Psoas muscle (tissue), 8 donors: ENCODE measurements at regions of chr3 and their contacts with region 1.

Region 1: GRCh38 chr3:112814266-112814665 is 32.4 kb downstream of the CD200R1L start:
- DNase-seq: no peak
- ATAC-seq: peak in 1 of 4 donors; percentile 55
- H3K4me3 ChIP-seq: no peak overlapping the region
- H3K27ac ChIP-seq: no peak overlapping the region
- H3K4me1 ChIP-seq: no peaks in the 10 kb centered on the region
- H3K27me3 ChIP-seq: no peaks in the 10 kb centered on the region
- CTCF ChIP-seq: peak; percentile 44

Region 2: GRCh38 chr3:112642912-112643506 is 171.3 kb before region 1 on chr3:
- intact Hi-C with region 1: loop called (anchors 2 to 5 kb)
- DNase-seq: peak; percentile 78 to 80
- ATAC-seq: peak; percentile 79 to 89 (median 83)
- H3K4me3 ChIP-seq: peak overlapping the region; percentile 31
- H3K27ac ChIP-seq: no peak overlapping the region
- H3K4me1 ChIP-seq: peaks cover 18% of the 10 kb centered on the region
- H3K27me3 ChIP-seq: no peaks in the 10 kb centered on the region
- CTCF ChIP-seq: peak; percentile 72

Region 3: DNA sequence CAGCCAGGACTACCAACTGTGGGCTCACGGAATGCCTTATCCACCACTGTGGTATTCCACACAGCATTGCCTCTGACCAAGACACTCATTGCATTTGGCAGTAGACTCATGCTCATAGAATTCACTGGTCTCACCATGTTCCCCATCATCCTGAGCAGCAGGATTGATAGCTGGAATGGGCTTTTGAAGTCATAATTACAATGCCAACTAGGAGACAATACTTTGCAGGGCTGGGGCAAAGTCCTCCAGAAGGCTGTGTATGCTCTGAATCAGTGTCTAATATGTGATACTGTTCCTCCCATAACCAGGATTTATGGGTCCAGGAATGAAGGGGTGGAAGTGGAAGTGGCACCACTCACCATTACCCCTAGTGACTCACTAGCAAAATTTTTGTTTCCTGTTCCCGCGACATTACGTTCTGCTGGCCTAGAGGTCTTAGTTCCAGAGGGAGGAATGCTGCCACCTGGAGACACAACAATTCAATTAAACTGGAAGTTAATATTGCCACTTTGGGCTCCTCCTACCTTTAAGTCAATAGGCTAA is 114.8 kb before region 1 on chr3:
- intact Hi-C with region 1: no loop called
- DNase-seq: no peak
- ATAC-seq: no peak
- H3K4me3 ChIP-seq: no peak overlapping the region
- H3K27ac ChIP-seq: no peak overlapping the region
- H3K4me1 ChIP-seq: no peaks in the 10 kb centered on the region
- H3K27me3 ChIP-seq: no peaks in the 10 kb centered on the region
- CTCF ChIP-seq: no peak

Region 4: GRCh38 chr3:112734718-112735350 is 79.4 kb before region 1 on chr3:
- intact Hi-C with region 1: loop called in 1 of 2 experiments (anchors 5 kb)
- DNase-seq: peak in 1 of 2 donors; percentile 42
- ATAC-seq: peak in 3 of 4 donors; percentile 19 to 54 (median 37)
- H3K4me3 ChIP-seq: no peak overlapping the region
- H3K27ac ChIP-seq: no peak overlapping the region
- H3K4me1 ChIP-seq: no peaks in the 10 kb centered on the region
- H3K27me3 ChIP-seq: no peaks in the 10 kb centered on the region
- CTCF ChIP-seq: peak; percentile 48

Region 5: DNA sequence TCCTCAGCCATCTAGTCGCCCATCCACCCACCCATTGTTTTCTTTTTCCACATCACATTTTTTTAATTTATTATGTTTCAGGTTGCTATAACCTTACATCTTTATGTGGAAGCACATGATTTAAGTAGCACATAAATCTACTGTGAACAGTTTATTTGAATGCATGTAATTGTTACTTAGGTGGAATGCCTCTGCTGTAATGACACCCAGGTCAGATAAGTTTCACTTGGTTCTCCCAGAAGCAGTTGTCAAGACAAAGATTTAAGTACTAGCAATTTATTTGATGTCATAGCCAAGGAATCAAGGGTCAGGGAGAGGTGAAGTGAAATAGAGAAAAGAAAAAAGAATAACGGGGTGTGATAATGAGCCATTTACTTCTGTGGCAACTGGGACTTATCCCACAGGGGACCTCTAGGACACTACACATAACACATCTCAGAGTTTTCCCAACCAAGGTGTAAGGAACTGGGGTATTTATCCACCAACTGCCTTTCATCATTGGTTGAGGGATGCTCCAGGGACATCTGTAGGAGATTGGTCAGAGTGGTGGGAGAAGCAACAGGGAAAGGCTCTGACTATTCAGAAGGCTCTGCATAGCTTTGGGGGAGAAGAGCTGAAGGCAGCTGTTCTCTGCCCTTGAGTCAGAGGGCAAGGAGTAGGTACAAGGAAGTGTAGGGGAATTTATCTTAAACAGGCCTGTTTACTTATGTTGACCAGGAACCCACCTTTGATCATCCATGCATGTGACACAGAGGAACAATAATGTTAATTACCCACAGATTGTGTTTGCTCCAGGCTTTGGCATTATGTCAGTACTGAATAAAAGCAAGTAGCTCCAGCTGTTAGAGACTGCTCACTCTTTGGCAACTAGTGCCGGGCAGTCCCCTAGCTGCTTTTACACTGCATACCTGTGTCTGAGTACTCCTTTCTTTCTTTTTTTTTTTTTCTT is 62.4 kb before region 1 on chr3:
- intact Hi-C with region 1: loop called in 1 of 2 experiments (anchors 2 kb)
- DNase-seq: no peak
- ATAC-seq: no peak
- H3K4me3 ChIP-seq: no peak overlapping the region
- H3K27ac ChIP-seq: no peak overlapping the region
- H3K4me1 ChIP-seq: no peaks in the 10 kb centered on the region
- H3K27me3 ChIP-seq: no peaks in the 10 kb centered on the region
- CTCF ChIP-seq: no peak

Region 6: GRCh38 chr3:112773864-112774590 is 40.2 kb before region 1 on chr3:
- intact Hi-C with region 1: no loop called
- DNase-seq: no peak
- ATAC-seq: no peak
- H3K4me3 ChIP-seq: no peak overlapping the region
- H3K27ac ChIP-seq: no peak overlapping the region
- H3K4me1 ChIP-seq: no peaks in the 10 kb centered on the region
- H3K27me3 ChIP-seq: no peaks in the 10 kb centered on the region
- CTCF ChIP-seq: no peak

Region 7: DNA sequence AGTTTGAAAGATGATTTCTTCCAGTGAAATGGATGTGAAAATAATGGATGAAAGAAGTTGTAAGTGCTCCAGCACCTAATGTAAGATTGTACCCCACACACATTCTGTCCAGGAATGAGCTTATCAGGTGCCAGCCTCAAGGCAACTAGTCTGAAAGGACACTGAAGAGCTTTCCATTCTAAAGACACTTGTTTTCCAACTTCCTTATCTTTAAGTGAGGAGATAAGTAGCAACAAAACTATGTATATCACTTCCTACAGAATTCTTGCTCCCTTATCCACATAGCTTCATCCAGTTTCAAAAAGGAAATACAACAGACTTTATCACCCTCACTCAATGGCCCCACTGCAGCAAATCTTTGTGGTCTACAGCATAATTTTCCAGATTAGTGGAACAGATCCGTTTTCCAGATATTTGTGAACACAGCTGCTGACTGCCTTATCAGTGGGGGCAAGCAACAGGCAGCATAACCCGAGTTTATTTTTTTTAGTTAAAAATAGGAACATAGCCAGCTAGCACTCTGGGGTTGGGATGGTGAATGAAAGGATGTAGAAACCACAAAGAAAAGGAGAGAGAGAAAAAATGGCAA is 28.2 kb before region 1 on chr3:
- intact Hi-C with region 1: no loop called
- DNase-seq: no peak
- ATAC-seq: no peak
- H3K4me3 ChIP-seq: no peak overlapping the region
- H3K27ac ChIP-seq: no peak overlapping the region
- H3K4me1 ChIP-seq: no peaks in the 10 kb centered on the region
- H3K27me3 ChIP-seq: no peaks in the 10 kb centered on the region
- CTCF ChIP-seq: no peak